Left cardiac atrium (tissue), 4 donors: ENCODE measurements at regions of chr9 and their contacts with region 1.

Region 1: DNA sequence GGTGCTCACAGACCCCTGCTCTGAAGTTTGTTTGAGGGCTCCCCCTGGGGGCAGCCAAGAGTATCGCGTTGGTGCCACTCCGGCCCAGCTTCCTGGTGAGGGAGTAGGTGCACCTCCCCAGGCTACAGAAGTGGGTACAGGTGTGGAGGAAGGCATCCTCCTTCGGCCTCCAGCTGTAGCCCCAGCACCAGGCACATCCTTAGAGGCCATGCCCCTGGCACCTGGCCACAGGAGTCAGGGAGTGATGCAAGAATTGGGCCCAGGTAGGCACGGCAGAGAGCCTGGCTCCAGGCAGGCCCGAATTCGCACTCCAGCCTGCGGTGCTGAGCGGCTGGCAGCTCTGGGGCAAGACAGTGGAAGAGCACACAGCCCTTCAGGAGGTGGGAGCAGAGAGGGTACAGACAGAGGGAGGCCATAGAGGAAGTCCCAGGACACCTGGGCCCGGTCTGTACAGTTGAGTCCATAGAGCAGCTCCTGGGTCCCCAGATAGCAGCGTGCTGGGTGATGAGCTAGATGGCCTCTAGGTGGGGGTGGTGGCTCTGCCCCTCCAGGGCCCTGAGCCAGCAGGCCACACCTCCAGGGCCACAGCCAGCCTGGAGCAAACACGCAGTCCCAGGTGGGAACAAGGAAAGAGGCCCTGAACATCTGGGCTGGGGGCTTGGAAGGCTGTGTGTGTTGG is 2.4 kb downstream of the SAPCD2 start:
- DNase-seq: peak; percentile 74
- ATAC-seq: peak; percentile 37 to 42

Region 2: GRCh38 chr9:136631038-136632000 is 436.7 kb before region 1 on chr9:
- intact Hi-C with region 1: no loop called
- DNase-seq: peak; percentile 88
- ATAC-seq: peak; percentile 92 to 93

Region 3: GRCh38 chr9:137046098-137046787 is 21.8 kb before region 1 on chr9 and contains the start of gene NPDC1:
- intact Hi-C with region 1: loop called in 1 of 2 experiments (anchors 1 kb)
- DNase-seq: peak; percentile 84
- ATAC-seq: peak; percentile 71 to 76
- total RNA-seq, gene NPDC1: 75.4 to 87.3 TPM